ENCODE measurements at regions of chr19 and their contacts with region 1.

Region 1: DNA sequence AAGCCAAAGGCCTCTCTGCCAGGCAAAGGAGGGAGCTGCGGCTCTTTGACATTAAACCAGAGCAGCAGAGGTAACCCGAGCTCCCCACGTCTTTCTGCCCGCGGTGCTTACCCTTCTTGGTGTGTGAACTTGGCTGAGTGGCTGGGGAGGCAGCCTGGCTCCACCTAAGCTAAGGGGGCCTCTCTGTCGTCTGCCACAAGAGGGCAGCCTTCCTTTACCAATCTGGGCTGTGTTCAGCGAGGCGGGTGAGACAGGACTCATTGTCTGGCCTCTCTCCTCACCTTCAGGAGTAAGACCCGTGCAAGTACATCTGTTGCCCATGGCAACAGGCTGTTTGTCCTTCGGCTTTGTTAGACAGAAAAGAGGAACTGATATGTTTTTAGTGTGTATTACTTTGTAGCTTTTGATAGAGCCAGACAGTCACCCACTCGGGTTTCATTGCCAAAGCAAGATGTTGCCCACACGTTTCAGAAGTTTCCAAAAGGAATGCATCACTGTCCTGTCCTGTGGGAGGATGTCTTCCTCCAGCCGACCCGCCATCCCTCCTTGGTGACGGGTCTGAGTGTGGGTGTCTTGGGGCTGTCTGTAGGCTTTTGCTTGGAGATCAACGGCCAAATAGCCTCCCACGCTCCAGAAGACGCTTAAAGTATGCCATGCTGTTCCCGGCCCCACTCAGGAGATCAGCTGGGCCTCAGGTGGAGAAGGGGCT is 4.6 kb downstream of the POP4 start:
- DNase-seq: peak; percentile 93
- ATAC-seq: peak; percentile 76
- H3K4me3 Mint-ChIP-seq: no peak overlapping the region
- H3K27ac Mint-ChIP-seq: peak overlapping the region; percentile 81
- H3K4me1 Mint-ChIP-seq: peaks cover 35% of the 10 kb centered on the region
- H3K27me3 Mint-ChIP-seq: no peaks in the 10 kb centered on the region

Region 2: DNA sequence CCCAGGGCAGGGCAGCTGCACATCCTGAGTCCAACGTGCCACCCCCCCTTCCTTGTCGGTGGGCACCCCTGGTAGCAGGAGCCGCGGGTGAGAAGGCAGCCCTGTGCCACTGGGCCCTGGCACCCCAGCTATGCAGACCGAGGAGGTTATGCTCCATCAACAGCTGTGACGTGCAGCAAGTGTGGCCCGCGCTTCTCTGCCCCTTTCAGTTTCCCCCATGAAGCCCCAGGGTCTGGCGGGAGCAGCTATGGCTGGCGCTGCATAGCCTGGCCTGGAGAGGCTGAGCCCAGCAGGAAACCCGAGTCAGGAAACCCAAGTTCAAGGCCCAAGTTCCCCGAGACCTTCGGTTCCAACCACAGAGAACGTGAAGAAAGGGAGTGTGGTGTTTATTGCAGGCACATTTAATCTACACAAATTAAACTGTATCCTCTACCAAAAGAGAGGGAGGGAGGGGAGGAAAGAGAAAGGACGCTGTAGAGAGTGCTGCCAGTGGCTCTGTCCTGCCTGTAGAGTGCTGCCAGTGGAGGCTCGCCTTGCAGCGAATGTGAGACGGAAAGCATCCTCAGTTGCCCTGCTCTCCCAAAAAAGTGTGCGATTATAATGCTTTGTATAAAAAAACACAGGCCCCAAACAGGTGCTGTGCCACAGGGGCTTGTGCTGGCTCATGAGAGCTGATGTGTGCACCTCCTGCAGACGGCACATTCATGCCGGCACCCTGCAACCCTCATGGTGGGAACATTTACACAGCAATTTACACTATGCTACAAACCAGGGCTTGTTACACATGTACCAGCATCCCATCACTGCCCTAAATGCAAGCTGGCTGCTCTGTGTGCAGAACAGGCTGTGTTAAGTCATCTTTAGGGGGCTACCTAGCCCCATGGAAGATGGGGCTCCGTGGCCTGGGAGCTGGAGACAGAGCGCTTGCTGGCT is 11.7 kb after region 1 on chr19:
- CTCF ChIA-PET with region 1: interaction called, 153 read pairs
- DNase-seq: peak; percentile 73
- ATAC-seq: peak; percentile 48
- H3K4me3 Mint-ChIP-seq: peak overlapping the region; percentile 87
- H3K27ac Mint-ChIP-seq: peak overlapping the region; percentile 97
- H3K4me1 Mint-ChIP-seq: peaks cover 70% of the 10 kb centered on the region
- H3K27me3 Mint-ChIP-seq: no peaks in the 10 kb centered on the region

Region 3: GRCh38 chr19:29665215-29665825 is 54.6 kb after region 1 on chr19 and contains the start of gene PLEKHF1:
- CTCF ChIA-PET with region 1: interaction called, 74 read pairs
- DNase-seq: peak; percentile 91
- ATAC-seq: peak; percentile 86
- H3K4me3 Mint-ChIP-seq: peak within 1 kb of the TSS; percentile 85
- H3K27ac Mint-ChIP-seq: peak within 1 kb of the TSS; percentile 90
- H3K4me1 Mint-ChIP-seq: peaks cover 63% of the 10 kb centered on the region
- H3K27me3 Mint-ChIP-seq: no peaks in the 10 kb centered on the region
- total RNA-seq, gene PLEKHF1: 42.4 to 64.1 TPM

Region 4: DNA sequence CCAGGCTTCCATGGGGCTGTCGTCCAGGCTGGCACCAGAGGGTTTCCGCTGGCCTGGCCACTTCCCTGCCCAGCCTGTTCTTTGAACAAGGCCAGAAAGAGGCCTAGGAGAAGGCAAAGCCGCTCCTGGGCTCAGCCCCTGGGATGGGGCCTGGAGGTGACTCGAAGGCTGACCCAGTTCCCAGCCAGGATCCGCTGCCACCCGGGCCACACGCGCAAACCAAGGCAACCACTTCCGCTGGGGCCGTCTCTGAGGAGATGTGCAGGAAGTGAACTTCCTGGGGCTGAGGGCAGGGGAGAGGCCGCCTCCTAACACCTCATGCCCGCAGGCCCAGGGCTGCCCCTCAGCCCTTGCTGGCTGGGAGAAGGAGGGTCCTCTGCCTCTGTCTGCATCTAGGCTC is 69.7 kb after region 1 on chr19:
- CTCF ChIA-PET with region 1: interaction called, 15 read pairs
- DNase-seq: peak; percentile 95
- ATAC-seq: peak; percentile 89
- H3K4me3 Mint-ChIP-seq: peak overlapping the region; percentile 43
- H3K27ac Mint-ChIP-seq: peak overlapping the region; percentile 85
- H3K4me1 Mint-ChIP-seq: peaks cover 73% of the 10 kb centered on the region
- H3K27me3 Mint-ChIP-seq: no peaks in the 10 kb centered on the region

Region 5: GRCh38 chr19:29694669-29695627 is 84.2 kb after region 1 on chr19:
- CTCF ChIA-PET with region 1: interaction called, 171 read pairs
- DNase-seq: peak; percentile 89
- ATAC-seq: peak; percentile 98
- H3K4me3 Mint-ChIP-seq: no peak overlapping the region
- H3K27ac Mint-ChIP-seq: peak overlapping the region; percentile 32
- H3K4me1 Mint-ChIP-seq: peaks cover 16% of the 10 kb centered on the region
- H3K27me3 Mint-ChIP-seq: no peaks in the 10 kb centered on the region

Region 6: GRCh38 chr19:29724102-29724641 is 113.5 kb after region 1 on chr19:
- CTCF ChIA-PET with region 1: interaction called, 13 read pairs
- DNase-seq: peak; percentile 55
- ATAC-seq: peak; percentile 77
- H3K4me3 Mint-ChIP-seq: peak overlapping the region; percentile 36
- H3K27ac Mint-ChIP-seq: peak overlapping the region; percentile 36
- H3K4me1 Mint-ChIP-seq: peaks cover 13% of the 10 kb centered on the region
- H3K27me3 Mint-ChIP-seq: peaks cover 50% of the 10 kb centered on the region

Measured in activated CD8-positive, alpha-beta memory T cell treated with anti-CD3 and anti-CD28 coated beads, Interleukin-2, amount 10 ng/mL, durations not matched to agents 7 days and 5 days (primary cell).